Lower lobe of right lung (tissue), 2 donors: ENCODE measurements at regions of chr17 and their contacts with region 1.

Region 1: DNA sequence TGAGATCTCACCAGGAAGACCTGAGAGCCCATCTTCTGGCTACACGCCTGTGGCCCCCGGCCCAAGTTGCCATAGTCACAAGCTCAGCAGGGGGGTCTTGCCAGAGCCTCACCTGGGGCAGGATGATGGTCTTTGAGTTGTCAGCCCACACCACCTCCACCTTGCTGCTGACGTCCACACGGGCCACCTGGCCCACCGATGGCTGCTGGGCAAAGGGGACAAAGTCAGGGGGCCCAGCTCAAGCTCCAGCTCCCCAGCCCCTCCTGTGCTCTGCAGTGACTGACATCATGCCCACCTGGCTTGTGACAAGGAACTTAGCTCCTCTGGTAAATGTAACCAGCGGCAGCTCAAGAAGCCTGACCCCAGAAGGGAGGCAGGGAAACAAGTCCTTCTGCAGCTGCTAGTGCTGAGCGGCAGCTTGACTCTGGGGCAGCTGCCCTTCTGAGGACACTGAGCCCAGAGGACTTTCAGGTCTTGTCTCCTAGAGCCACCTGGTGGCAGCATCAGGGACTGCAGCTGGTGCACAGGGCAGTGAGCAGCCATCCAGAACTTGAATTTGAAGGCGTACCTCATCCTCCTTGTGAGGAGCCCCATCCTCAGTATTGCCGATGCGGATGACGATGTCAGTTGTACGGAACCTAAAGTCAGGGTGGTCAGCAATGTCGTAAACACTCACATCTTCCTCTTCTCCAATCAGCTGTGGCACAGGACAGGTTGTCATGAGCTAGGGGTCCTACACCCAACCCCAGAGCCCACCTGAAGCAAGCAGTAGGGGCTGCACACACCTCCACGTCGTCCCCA is 13.5 kb downstream of the SPHK1 start:
- DNase-seq: peak; percentile 91
- ATAC-seq: peak; percentile 85 to 87
- H3K4me3 ChIP-seq: no peak overlapping the region
- H3K27ac ChIP-seq: no peak overlapping the region
- H3K4me1 ChIP-seq: no peaks in the 10 kb centered on the region
- H3K27me3 ChIP-seq: no peaks in the 10 kb centered on the region
- CTCF ChIP-seq: peak; percentile 99

Region 2: GRCh38 chr17:76304226-76305134 is 93.4 kb before region 1 on chr17:
- intact Hi-C with region 1: loop called (anchors 5 kb)
- DNase-seq: no peak
- ATAC-seq: peak in 1 of 2 donors; percentile 8
- H3K4me3 ChIP-seq: no peak overlapping the region
- H3K27ac ChIP-seq: no peak overlapping the region
- H3K4me1 ChIP-seq: no peaks in the 10 kb centered on the region
- H3K27me3 ChIP-seq: no peaks in the 10 kb centered on the region
- CTCF ChIP-seq: no peak

Region 3: DNA sequence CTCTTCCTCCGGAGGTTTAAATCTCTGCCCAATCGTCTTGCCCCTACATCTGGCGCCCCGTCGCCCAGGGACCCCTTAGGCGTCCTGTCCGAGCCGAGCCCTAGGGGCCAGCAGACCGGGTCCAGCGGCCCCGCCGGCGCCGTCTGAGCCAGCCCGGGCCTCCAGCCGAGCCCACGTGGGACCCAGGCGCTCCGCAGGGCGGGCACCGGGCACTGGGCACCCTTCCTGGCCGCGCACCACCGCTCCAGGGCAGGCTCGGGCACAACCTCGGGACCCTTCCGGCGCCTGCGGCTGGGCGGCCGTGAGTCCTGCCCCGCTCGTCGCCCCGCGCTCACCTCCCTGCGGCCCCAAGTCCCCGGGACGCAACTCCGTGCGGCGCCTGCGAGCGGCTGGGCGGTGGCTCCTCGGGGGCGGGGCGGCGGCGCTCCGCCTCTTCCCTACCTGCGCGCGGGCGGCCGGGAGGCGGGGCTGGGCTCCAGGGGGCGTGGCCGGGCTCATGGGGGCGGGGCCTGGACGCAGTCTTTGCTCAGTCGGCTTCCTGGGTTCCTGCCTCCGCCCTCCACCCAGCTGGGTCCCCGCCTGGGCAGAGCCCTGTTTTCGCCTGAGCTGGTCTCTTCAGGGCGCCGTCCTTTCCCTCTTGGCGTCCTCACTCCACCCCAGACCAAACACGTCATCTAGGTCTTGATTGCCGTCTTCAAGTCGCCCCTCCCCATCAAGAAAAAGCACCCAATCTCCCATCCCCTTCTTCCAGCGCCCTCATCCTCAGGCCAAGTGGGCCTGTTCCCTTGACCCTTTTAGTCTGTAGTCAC is 103.3 kb after region 1 on chr17 and contains the start of gene RHBDF2:
- intact Hi-C with region 1: no loop called
- DNase-seq: peak; percentile 94
- ATAC-seq: peak; percentile 95 to 96
- H3K4me3 ChIP-seq: peak within 1 kb of the TSS; percentile 81
- H3K27ac ChIP-seq: peak within 1 kb of the TSS; percentile 90
- H3K4me1 ChIP-seq: peaks cover 58% of the 10 kb centered on the region
- H3K27me3 ChIP-seq: no peaks in the 10 kb centered on the region
- CTCF ChIP-seq: no peak
- total RNA-seq, gene RHBDF2: 47.8 TPM